ENCODE measurements at regions of chr1 and their contacts with region 1.

Region 1: DNA sequence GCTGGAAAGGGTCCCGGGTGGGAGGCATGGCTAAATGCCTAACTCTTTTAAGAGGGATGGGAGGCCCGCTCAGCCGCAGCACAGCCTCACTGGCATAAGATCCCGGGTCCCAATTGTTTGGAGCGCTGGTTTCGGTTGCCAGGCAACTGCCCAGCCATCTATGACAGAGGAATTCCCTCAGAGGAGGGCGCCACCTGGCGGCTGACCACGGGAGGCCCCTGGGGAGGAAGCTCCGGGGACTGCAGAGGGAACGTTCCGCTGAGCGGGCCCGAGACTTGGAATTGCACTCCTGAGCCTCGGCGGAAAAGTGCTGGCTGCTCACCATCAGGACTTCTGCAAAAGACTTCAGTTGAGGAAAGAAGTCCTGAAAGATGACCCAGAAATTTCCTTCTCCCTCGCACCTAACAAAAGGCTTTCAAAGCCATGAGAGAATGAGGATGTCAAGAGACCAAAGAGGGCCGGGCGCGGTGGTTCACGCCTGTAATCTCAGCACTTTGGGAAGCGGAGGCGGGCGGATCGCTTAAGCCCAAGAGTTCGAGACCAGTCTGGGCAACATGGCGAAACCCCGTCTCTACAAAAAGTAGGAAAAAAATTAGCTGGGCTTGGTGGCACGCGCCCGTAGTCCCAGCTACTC is 1.1 kb upstream of the ELAPOR1 start:
- H3K4me3 ChIP-seq: no peak overlapping the region
- H3K27ac ChIP-seq: no peak overlapping the region
- H3K4me1 ChIP-seq: no peaks in the 10 kb centered on the region
- CTCF ChIP-seq: peak; percentile 79

Region 2: GRCh38 chr1:109151164-109151990 is 38.6 kb after region 1 on chr1:
- CTCF ChIA-PET with region 1: interaction called, 10 read pairs
- POLR2A ChIA-PET with region 1: no interaction called
- H3K4me3 ChIP-seq: no peak overlapping the region
- H3K27ac ChIP-seq: no peak overlapping the region
- H3K4me1 ChIP-seq: no peaks in the 10 kb centered on the region
- CTCF ChIP-seq: no peak

Measured in HEK293 (cell line).